ENCODE measurements at regions of chr19 and their contacts with region 1.

Region 1: GRCh38 chr19:4624733-4625362 is 14.5 kb upstream of the TNFAIP8L1 start:
- DNase-seq: no peak
- CTCF ChIP-seq: peak; percentile 21

Region 2: GRCh38 chr19:4186087-4186993 is 438.5 kb before region 1 on chr19:
- CTCF ChIA-PET with region 1: no interaction called
- POLR2A ChIA-PET with region 1: interaction called, 11 read pairs
- DNase-seq: peak; percentile 86
- CTCF ChIP-seq: peak; percentile 84